Mammary epithelial cell (primary cell): ENCODE measurements at regions of chr7 and their contacts with region 1.

Region 1: GRCh38 chr7:83655951-83656556 is 7.1 kb upstream of the SEMA3E start:
- DNase-seq: peak; percentile 32
- H3K4me3 ChIP-seq: no peak overlapping the region
- H3K27ac ChIP-seq: no peak overlapping the region
- H3K4me1 ChIP-seq: no peaks in the 10 kb centered on the region
- H3K27me3 ChIP-seq: no peaks in the 10 kb centered on the region
- CTCF ChIP-seq: peak; percentile 92 to 95

Region 2: DNA sequence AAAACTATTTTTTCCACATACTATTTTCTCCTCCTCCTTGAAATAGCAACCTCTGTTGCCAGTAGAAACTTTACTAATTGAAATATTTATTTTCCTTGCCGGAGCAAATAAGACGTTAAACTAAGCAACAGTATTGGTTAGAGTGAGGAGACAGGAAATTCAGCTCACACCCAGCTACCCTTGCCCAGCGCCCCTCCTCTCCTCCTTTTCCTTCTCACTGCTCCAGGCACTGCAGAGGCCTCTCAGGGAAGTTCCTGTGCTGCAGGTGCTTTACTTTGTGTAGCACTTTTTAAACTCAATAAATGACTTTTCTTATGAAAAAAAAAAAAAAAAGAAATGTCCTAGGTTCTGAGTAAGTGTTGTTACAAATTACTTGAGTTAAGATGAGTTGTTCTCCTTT is 141.1 kb before region 1 on chr7:
- CTCF ChIA-PET with region 1: no interaction called
- dilution Hi-C with region 1: no loop called
- in situ Hi-C with region 1: no loop called
- intact Hi-C with region 1: loop called (anchors 2 kb)
- DNase-seq: no peak
- H3K4me3 ChIP-seq: no peak overlapping the region
- H3K27ac ChIP-seq: no peak overlapping the region
- H3K4me1 ChIP-seq: no peaks in the 10 kb centered on the region
- H3K27me3 ChIP-seq: no peaks in the 10 kb centered on the region
- CTCF ChIP-seq: no peak